Activated T-helper 2 cell treated with anti-CD3 and anti-CD28 coated beads, Interferon-gamma antibody, Interleukin-2, Interleukin-4, amounts not matched to agents 10 μg/mL and 5 μg/mL and 100 μg/mL, durations not matched to agents 14 hours and 24 hours and 36 hours (primary cell): ENCODE measurements at regions of chr16 and their contacts with region 1.

Region 1: DNA sequence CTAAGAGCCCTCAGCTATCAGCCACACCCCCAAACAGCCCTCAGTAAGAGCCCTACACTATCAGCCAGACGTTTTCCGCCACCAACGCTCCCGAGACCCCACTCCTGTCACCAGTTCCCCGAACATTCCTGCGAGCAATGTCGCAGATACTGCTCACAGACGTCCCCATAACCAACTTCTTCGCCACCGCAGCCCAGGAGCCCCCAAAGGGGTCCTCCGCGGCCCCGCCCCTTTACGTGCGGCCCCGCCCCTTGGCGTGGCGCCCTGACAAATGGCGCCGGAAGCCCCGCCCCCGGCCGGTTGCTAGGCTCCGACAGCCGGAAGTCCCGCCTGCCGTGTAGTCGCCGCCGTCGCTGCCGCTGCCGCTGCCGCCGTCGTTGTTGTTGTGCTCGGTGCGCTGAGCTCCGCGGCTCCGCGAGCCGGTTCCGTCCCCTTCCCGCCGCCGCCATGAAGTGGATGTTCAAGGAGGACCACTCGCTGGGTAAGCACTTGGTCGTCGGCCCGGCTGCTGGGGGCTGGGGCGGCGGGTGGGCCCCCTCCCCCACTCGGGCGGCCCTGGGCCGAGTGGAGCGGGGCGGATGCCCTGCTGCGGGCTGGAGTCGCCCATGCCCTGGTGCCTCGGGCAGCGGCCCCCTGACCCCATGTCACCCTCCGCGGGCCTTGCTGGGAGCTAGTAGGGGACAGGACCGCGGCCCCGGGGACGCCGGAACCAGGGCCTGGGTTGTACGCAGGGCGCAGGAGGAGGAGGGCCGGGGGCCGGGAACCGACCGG is at the start of gene GABARAPL2:
- DNase-seq: peak; percentile 86
- H3K4me3 Mint-ChIP-seq: peak within 1 kb of the TSS; percentile 96
- H3K27ac Mint-ChIP-seq: peak within 1 kb of the TSS; percentile 90
- H3K4me1 Mint-ChIP-seq: peaks cover 25% of the 10 kb centered on the region
- H3K27me3 Mint-ChIP-seq: peaks cover 14% of the 10 kb centered on the region
- total RNA-seq, gene GABARAPL2: 69.2 and 69.4 TPM in 2 replicates

Region 2: GRCh38 chr16:75452464-75453190 is 113.6 kb before region 1 on chr16:
- intact Hi-C with region 1: no loop called
- DNase-seq: no peak
- H3K4me3 Mint-ChIP-seq: no peak overlapping the region
- H3K27ac Mint-ChIP-seq: no peak overlapping the region
- H3K4me1 Mint-ChIP-seq: peaks cover 8% of the 10 kb centered on the region
- H3K27me3 Mint-ChIP-seq: no peaks in the 10 kb centered on the region

Region 3: GRCh38 chr16:75464130-75464918 is 101.9 kb before region 1 on chr16 and contains the start of gene TMEM170A:
- intact Hi-C with region 1: loop called (anchors 2 kb)
- DNase-seq: peak; percentile 98
- H3K4me3 Mint-ChIP-seq: peak within 1 kb of the TSS; percentile 91
- H3K27ac Mint-ChIP-seq: peak within 1 kb of the TSS; percentile 89
- H3K4me1 Mint-ChIP-seq: peaks cover 36% of the 10 kb centered on the region
- H3K27me3 Mint-ChIP-seq: peaks cover 2% of the 10 kb centered on the region
- total RNA-seq, gene TMEM170A: 35.6 and 39.9 TPM in 2 replicates

Region 4: DNA sequence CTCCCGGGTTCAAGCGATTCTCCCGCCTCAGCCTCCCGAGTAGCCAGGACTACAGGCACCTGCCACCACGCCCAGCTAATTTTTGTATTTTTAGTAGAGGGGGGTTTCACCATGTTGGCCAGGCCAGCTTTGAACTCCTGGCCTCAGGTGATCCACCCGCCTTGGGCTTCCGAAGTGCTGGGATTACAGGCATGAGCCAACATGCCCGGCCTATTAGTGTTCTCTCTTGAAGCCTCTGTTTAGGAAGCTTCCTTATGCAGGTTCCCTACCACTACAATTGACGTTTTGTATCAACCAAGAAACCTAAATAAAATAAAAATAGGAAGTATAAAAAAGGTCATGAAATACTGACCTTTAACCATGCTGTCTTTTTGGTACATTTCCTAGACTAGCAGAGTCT is 46.3 kb before region 1 on chr16:
- intact Hi-C with region 1: loop called (anchors 1 kb)
- DNase-seq: no peak
- H3K4me3 Mint-ChIP-seq: no peak overlapping the region
- H3K27ac Mint-ChIP-seq: no peak overlapping the region
- H3K4me1 Mint-ChIP-seq: peaks cover 7% of the 10 kb centered on the region
- H3K27me3 Mint-ChIP-seq: peaks cover 7% of the 10 kb centered on the region

Region 5: GRCh38 chr16:75555707-75556430 is 10.4 kb before region 1 on chr16 and contains the start of gene TMEM231:
- intact Hi-C with region 1: loop called (anchors 1 kb)
- DNase-seq: peak; percentile 94
- H3K4me3 Mint-ChIP-seq: peak within 1 kb of the TSS; percentile 90
- H3K27ac Mint-ChIP-seq: peak within 1 kb of the TSS; percentile 86
- H3K4me1 Mint-ChIP-seq: peaks cover 7% of the 10 kb centered on the region
- H3K27me3 Mint-ChIP-seq: peaks cover 26% of the 10 kb centered on the region
- total RNA-seq, gene TMEM231: 2.7 and 3.4 TPM in 2 replicates